Right cardiac atrium (tissue), 5 donors: ENCODE measurements at regions of chr18 and their contacts with region 1.

Region 1: DNA sequence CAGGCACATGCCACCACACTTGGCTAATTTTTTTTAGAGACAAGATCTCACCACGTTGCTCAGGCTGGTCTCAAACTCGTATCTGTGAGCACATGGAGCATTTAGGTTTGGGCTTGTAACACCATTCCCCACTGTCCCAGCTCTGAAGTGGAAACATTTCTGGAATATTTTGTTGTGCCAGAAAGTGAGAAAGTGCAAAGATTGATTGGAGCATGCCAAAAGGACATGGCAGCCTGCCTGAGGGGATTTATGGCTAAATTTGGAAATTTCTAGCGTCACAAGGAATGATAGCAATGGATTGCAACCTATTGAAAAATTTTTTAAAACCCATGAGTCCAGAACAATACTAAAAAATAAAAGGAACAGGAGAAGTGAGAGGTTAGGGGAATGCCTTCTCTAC is 136.8 kb downstream of the ESCO1 start:
- DNase-seq: no peak
- ATAC-seq: peak; percentile 29 to 65
- H3K4me3 ChIP-seq: no peak overlapping the region
- H3K27ac ChIP-seq: no peak overlapping the region
- H3K4me1 ChIP-seq: peaks cover 4% of the 10 kb centered on the region
- H3K27me3 ChIP-seq: no peaks in the 10 kb centered on the region

Region 2: DNA sequence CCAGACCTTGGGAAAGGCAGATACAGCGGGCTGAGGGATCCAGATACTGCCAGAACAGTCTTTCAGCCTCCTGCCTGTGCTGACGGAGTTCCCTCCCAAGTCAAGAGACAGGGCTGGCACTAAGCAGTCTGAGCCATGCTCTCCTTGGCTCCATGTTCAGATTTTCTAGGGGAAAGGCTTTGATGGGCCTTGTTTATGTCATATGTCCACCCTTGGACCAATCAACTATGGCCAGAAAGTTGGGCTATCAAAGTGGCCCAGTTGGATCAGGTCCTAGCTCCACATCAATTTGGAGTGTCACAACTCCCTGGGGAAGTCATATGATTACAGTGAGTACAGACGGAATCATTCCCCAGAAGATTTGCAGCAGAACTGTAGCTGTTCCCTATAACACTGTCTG is 69.7 kb before region 1 on chr18:
- intact Hi-C with region 1: no loop called
- DNase-seq: peak in 1 of 3 donors; percentile 15
- ATAC-seq: peak; percentile 83 to 90
- H3K4me3 ChIP-seq: no peak overlapping the region
- H3K27ac ChIP-seq: no peak overlapping the region
- H3K4me1 ChIP-seq: no peaks in the 10 kb centered on the region
- H3K27me3 ChIP-seq: no peaks in the 10 kb centered on the region

Region 3: GRCh38 chr18:21509062-21509461 is 45.3 kb after region 1 on chr18:
- intact Hi-C with region 1: no loop called
- DNase-seq: no peak
- ATAC-seq: no peak
- H3K4me3 ChIP-seq: no peak overlapping the region
- H3K27ac ChIP-seq: no peak overlapping the region
- H3K4me1 ChIP-seq: peaks cover 2% of the 10 kb centered on the region
- H3K27me3 ChIP-seq: no peaks in the 10 kb centered on the region

Region 4: GRCh38 chr18:21526463-21526862 is 62.7 kb after region 1 on chr18:
- intact Hi-C with region 1: loop called in 1 of 4 experiments (anchors 10 kb)
- DNase-seq: no peak
- ATAC-seq: peak; percentile 34 to 65
- H3K4me3 ChIP-seq: no peak overlapping the region
- H3K27ac ChIP-seq: no peak overlapping the region
- H3K4me1 ChIP-seq: no peaks in the 10 kb centered on the region
- H3K27me3 ChIP-seq: no peaks in the 10 kb centered on the region

Region 5: GRCh38 chr18:21584391-21584790 is 120.7 kb after region 1 on chr18:
- intact Hi-C with region 1: no loop called
- DNase-seq: no peak
- ATAC-seq: no peak
- H3K4me3 ChIP-seq: no peak overlapping the region
- H3K27ac ChIP-seq: no peak overlapping the region
- H3K4me1 ChIP-seq: no peaks in the 10 kb centered on the region
- H3K27me3 ChIP-seq: no peaks in the 10 kb centered on the region